ENCODE measurements at regions of chr3 and their contacts with region 1.

Region 1: DNA sequence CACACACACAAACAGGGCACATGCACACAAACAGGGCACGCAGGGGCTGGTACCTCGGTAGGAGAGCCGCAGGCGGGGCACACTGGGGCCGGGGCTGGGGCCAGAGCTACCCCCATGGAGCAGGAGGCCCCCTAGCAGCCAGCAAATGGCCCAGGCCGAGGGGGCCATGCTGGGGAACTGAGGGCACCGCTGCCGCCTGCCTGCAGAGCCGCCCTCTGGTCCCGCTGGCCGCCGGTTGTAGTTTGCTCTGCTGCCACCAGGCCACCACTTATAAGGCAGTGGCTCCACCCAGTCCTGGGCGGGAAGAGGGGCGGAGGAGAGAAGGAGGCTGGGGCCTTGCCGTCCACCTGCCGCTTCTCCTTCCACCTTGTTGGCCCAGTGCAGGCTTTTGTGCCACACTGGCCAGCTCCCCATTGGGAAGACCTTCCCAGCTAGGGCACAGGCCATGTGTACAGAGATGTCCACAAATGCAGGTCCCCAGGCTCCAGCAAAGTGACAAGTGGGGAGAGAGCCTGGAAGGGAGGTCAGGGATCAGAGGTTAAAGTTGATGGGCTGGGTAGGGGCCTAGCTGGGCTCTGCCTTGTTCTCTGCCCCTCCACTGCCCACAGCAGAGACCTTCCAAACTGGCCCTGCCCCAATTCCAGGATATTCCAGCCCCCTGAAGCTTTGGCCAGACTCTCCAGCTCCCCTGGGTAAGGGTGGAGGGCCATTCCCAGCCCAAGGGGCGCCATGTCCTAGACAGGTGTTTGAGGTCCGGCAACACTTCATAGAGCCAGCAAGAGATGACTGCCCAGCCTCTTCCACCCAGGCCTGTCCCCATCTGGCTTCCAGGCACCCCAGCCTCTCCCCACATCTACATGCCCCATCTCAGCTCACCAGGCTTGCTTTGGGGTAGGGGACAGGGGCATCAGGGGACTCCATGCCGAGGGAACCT is at the start of gene SEMA3G:
- DNase-seq: peak; percentile 74 to 86 (median 85)
- H3K4me3 ChIP-seq: peak within 1 kb of the TSS in 2 of 7 experiments; percentile 26 to 42
- H3K27ac ChIP-seq: no peak within 1 kb of the TSS
- H3K4me1 ChIP-seq: peaks cover 0 to 11% (median 6%) of the 10 kb centered on the region in 4 experiments
- H3K27me3 ChIP-seq: no peaks in the 10 kb centered on the region

Region 2: GRCh38 chr3:52406231-52406661 is 38.9 kb before region 1 on chr3:
- CTCF ChIA-PET with region 1: interaction called, 20 read pairs
- POLR2A ChIA-PET with region 1: no interaction called
- DNase-seq: no peak
- H3K4me3 ChIP-seq: no peak overlapping the region
- H3K27ac ChIP-seq: no peak overlapping the region
- H3K4me1 ChIP-seq: peaks cover 2 to 17% (median 15%) of the 10 kb centered on the region in 4 experiments
- H3K27me3 ChIP-seq: no peaks in the 10 kb centered on the region

Region 3: GRCh38 chr3:52455283-52456168 is 10.4 kb after region 1 on chr3 and contains the start of gene NISCH:
- CTCF ChIA-PET with region 1: interaction called, 26 read pairs
- POLR2A ChIA-PET with region 1: no interaction called
- DNase-seq: peak; percentile 82 to 91 (median 91)
- H3K4me3 ChIP-seq: peak within 1 kb of the TSS; percentile 61 to 90 (median 78)
- H3K27ac ChIP-seq: peak within 1 kb of the TSS; percentile 40 to 81
- H3K4me1 ChIP-seq: peaks cover 0 to 31% (median 23%) of the 10 kb centered on the region in 4 experiments
- H3K27me3 ChIP-seq: no peaks in the 10 kb centered on the region

Measured in common myeloid progenitor, CD34-positive (primary cell).